ENCODE measurements at regions of chr3 and their contacts with region 1.

Region 1: GRCh38 chr3:143963946-143964345 is 7.7 kb upstream of the DIPK2A start:
- DNase-seq: no peak
- H3K4me3 ChIP-seq: no peak overlapping the region
- H3K27ac ChIP-seq: no peak overlapping the region
- H3K4me1 ChIP-seq: no peaks in the 10 kb centered on the region
- H3K27me3 ChIP-seq: peaks cover 0 to 4% (median 0%) of the 10 kb centered on the region in 4 donors
- CTCF ChIP-seq: no peak
- POLR2A ChIP-seq: no peak

Region 2: GRCh38 chr3:143775459-143775858 is 188.5 kb before region 1 on chr3:
- intact Hi-C with region 1: loop called (anchors 10 kb)
- DNase-seq: no peak
- H3K4me3 ChIP-seq: peak overlapping the region in 2 of 4 donors; percentile 10 to 46
- H3K27ac ChIP-seq: peak overlapping the region in 1 of 4 donors; percentile 4
- H3K4me1 ChIP-seq: peaks cover 4 to 29% (median 12%) of the 10 kb centered on the region in 3 donors
- H3K27me3 ChIP-seq: no peaks in the 10 kb centered on the region
- CTCF ChIP-seq: peak in 5 of 6 experiments; percentile 42 to 67 (median 49)
- POLR2A ChIP-seq: no peak

Measured in esophagus squamous epithelium (tissue), 5 donors.